Vagina (tissue), 2 donors: ENCODE measurements at regions of chr1 and their contacts with region 1.

Region 1: DNA sequence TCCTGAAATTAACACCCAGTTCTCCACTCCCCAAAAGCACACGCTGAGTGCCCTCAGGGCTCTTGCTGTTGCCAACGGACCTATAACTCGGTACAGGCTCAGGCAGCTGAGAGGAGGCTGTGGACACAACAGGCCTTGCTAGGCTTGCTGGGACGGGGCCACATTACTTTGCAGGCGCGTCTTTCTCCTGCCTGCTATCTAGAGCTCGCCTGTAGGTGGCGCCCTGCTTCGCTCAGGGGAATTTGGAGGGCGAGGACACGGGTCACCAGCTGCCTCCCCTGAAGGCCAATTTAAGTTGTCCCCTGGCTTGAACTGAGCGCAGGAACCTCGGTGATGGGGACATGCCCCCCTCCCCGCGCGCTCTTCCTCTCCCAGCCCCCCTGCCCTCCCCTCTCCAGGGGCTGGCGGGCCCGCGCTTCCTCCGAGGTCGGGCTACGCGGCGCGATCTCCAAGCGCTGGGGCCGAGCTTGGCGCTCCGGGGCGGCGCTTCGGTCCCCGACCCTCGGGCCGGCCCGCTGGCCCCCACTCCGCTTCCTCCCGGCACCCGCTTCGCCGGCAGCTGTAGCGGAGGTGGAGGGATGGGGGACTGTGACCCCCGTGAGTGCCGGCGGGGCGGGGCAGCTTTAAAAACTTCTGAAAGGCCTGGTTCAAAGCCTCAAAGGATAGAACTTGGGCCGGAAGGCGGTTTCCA is 32.4 kb upstream of the NFIA start:
- DNase-seq: no peak
- H3K4me3 ChIP-seq: peak overlapping the region; percentile 76 to 97
- H3K27ac ChIP-seq: peak overlapping the region; percentile 97
- H3K4me1 ChIP-seq: peaks cover 25% of the 10 kb centered on the region
- H3K27me3 ChIP-seq: no peaks in the 10 kb centered on the region
- CTCF ChIP-seq: peak; percentile 73 to 97 (median 97)
- POLR2A ChIP-seq: peak in 1 of 2 donors; percentile 23

Region 2: DNA sequence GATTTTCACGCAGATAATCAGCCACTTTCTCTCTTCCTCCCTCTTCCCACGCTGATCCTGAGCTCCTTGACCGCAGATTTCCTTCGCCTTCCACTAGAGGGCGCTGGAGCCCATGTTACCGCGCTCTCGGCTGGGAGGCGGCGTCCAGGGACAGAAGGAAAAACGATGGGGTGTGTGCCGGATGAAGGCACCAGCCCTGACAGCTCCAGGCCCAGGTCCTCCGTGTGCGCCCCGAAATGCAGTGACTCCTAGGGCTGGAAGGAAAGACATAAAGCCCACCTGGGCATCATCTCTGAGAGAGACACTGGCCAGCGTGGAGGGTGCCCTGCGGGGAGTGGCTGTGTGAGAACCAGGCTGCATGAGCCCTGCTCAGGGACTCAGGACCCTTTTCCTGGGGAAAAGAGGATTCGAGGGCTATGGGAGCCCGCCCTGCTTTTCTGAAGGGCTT is 1078.5 kb before region 1 on chr1:
- intact Hi-C with region 1: loop called (anchors 10 kb)
- DNase-seq: no peak
- H3K4me3 ChIP-seq: no peak overlapping the region
- H3K27ac ChIP-seq: no peak overlapping the region
- H3K4me1 ChIP-seq: peaks cover 4% of the 10 kb centered on the region
- H3K27me3 ChIP-seq: no peaks in the 10 kb centered on the region
- CTCF ChIP-seq: peak; percentile 45 to 72 (median 70)
- POLR2A ChIP-seq: no peak

Region 3: GRCh38 chr1:60281360-60281932 is 768.5 kb before region 1 on chr1:
- intact Hi-C with region 1: loop called (anchors 10 kb)
- DNase-seq: no peak
- H3K4me3 ChIP-seq: no peak overlapping the region
- H3K27ac ChIP-seq: no peak overlapping the region
- H3K4me1 ChIP-seq: peaks cover 6% of the 10 kb centered on the region
- H3K27me3 ChIP-seq: no peaks in the 10 kb centered on the region
- CTCF ChIP-seq: peak; percentile 26 to 50 (median 48)
- POLR2A ChIP-seq: no peak

Region 4: GRCh38 chr1:61077676-61078541 is 27.9 kb after region 1 on chr1:
- intact Hi-C with region 1: loop called (anchors 2 kb)
- DNase-seq: peak in 1 of 2 donors; percentile 94
- H3K4me3 ChIP-seq: peak overlapping the region; percentile 53 to 66
- H3K27ac ChIP-seq: peak overlapping the region; percentile 82
- H3K4me1 ChIP-seq: peaks cover 44% of the 10 kb centered on the region
- H3K27me3 ChIP-seq: no peaks in the 10 kb centered on the region
- CTCF ChIP-seq: no peak
- POLR2A ChIP-seq: no peak

Region 5: DNA sequence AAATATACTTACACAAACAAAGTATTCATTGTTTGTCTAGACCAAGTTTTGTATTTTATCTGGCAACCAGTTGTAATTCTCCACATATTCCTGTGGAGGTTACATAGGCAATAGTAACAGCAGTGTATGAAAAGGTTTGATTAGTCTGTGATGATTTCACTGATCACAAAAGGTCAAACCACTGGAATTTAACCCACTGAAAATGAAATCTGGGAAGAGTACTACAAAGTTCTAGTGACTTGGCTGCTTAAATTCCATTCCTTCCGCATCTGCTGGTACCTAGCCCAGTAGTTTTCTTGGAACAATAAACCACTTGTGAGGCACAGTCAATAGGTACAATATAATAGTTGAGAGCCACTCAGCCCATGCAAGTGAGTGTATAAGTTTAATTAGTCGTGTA is 237.7 kb after region 1 on chr1:
- intact Hi-C with region 1: no loop called
- DNase-seq: no peak
- H3K4me3 ChIP-seq: no peak overlapping the region
- H3K27ac ChIP-seq: no peak overlapping the region
- H3K4me1 ChIP-seq: peaks cover 5% of the 10 kb centered on the region
- H3K27me3 ChIP-seq: no peaks in the 10 kb centered on the region
- CTCF ChIP-seq: no peak
- POLR2A ChIP-seq: no peak

Region 6: GRCh38 chr1:61337981-61338848 is 288.2 kb after region 1 on chr1:
- intact Hi-C with region 1: loop called (anchors 10 kb)
- DNase-seq: no peak
- H3K4me3 ChIP-seq: peak overlapping the region in 1 of 2 donors; percentile 24
- H3K27ac ChIP-seq: peak overlapping the region; percentile 47
- H3K4me1 ChIP-seq: peaks cover 27% of the 10 kb centered on the region
- H3K27me3 ChIP-seq: no peaks in the 10 kb centered on the region
- CTCF ChIP-seq: peak in 2 of 3 experiments; percentile 51 to 69
- POLR2A ChIP-seq: no peak

Region 7: GRCh38 chr1:61453111-61453961 is 403.3 kb after region 1 on chr1:
- intact Hi-C with region 1: loop called (anchors 5 kb)
- DNase-seq: peak in 1 of 2 donors; percentile 95
- H3K4me3 ChIP-seq: no peak overlapping the region
- H3K27ac ChIP-seq: peak overlapping the region; percentile 54
- H3K4me1 ChIP-seq: peaks cover 56% of the 10 kb centered on the region
- H3K27me3 ChIP-seq: no peaks in the 10 kb centered on the region
- CTCF ChIP-seq: peak; percentile 12 to 66 (median 58)
- POLR2A ChIP-seq: no peak

Region 8: DNA sequence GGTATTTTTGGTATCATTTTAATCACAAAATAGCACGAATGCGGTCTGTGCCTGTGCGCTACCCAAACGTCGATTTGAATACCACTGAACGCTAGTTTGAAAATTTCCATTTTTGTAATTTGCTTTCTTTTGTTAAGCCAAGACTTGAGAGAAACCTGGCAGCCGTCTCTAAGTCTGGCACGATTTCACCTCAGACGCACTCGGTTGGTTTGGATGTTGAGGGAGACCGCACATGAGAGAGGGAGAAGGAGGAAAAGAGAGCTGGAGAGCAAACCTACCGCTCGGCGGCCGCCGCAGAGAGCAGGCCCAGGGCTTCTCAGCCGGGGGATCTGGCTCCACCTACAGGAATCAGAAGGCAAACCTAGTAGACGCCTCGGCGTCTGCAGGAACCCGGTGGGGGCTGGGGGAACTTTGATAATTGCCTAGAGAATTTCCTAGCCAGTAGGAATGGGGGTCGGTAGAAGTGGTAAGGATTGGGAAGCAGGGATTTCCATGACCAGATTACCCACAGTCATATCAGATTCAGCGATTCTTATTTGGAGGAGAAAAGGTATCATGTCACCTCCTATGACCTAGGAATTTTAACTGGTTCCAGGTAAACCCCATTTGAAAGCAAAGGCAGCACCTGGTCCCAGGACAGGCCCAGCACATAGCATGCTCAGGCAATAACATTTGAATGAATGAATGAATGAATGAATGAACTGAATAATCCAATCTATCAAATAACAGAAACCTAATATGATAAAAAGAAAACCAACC is 591.8 kb after region 1 on chr1:
- intact Hi-C with region 1: loop called (anchors 10 kb)
- DNase-seq: no peak
- H3K4me3 ChIP-seq: no peak overlapping the region
- H3K27ac ChIP-seq: no peak overlapping the region
- H3K4me1 ChIP-seq: peaks cover 27% of the 10 kb centered on the region
- H3K27me3 ChIP-seq: no peaks in the 10 kb centered on the region
- CTCF ChIP-seq: peak; percentile 7 to 56 (median 31)
- POLR2A ChIP-seq: no peak